IMR-90 (cell line): ENCODE measurements at regions of chrX and their contacts with region 1.

Region 1: DNA sequence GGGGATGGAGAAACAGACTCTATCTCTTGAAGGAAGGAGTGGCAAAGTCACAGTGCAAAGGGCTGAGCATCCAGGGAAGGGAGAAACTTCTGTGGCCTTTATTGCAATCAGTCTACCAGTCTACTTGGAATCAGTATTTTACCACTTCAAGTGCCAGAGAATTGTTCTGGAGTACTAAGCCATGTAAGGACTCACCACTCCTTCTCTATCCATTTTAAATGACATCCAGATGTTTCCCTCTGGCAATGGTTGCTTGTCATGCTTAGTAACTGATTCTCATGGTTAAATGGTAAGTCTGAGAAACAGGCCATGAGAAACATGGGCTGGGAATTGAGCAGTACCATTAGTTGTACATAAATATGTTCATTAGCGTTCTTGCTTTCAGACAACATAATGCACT is 21.1 kb upstream of the SMIM10 start:
- DNase-seq: no peak
- ATAC-seq: no peak
- H3K4me3 ChIP-seq: no peak overlapping the region
- H3K27ac ChIP-seq: no peak overlapping the region
- H3K4me1 ChIP-seq: peaks cover 3% of the 10 kb centered on the region; the same call in 1 of the 2 replicates
- H3K27me3 ChIP-seq: peaks cover 2% of the 10 kb centered on the region
- CTCF ChIP-seq: no peak
- POLR2A ChIP-seq: no peak
- RAD21 ChIP-seq: no peak

Region 2: DNA sequence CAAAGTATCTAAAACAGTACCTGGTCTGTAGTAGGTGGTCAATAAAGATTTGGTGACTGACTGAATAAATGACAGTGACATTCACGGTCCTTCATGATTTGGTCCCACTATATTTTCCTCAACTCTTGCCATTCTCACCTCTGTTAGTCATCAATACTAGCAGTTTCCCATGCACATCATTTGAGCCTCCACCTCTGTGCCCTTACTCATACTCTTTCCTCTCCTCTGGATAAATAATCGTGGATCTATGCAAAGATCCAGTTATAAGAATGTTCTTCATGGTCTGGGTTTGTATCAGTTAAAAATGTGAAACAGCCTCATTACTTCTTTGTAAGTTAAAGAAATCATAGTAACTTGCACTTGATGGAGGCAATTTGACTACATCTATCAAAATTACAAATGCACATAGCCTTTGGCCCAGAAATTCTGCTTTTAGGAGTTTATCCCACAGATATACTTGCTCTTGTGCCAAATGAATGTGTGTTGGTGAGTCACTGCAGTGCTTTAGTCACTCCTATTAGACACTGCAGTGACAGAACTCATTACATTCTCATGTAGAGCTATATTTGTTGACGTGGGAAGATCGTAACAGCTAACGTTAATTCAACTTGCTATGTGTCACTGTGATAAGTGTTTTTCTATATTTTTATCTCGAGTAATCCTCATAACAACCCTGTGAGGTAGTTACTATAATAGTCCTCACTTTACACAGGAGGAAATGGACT is 100.8 kb before region 1 on chrX:
- CTCF ChIA-PET with region 1: no interaction called
- POLR2A ChIA-PET with region 1: no interaction called
- dilution Hi-C with region 1: no loop called
- in situ Hi-C with region 1: no loop called
- intact Hi-C with region 1: no loop called
- DNase-seq: peak; percentile 96
- ATAC-seq: peak; percentile 78
- H3K4me3 ChIP-seq: no peak overlapping the region
- H3K27ac ChIP-seq: no peak overlapping the region
- H3K4me1 ChIP-seq: no peaks in the 10 kb centered on the region
- H3K27me3 ChIP-seq: no peaks in the 10 kb centered on the region
- CTCF ChIP-seq: no peak
- POLR2A ChIP-seq: no peak
- RAD21 ChIP-seq: no peak

Region 3: DNA sequence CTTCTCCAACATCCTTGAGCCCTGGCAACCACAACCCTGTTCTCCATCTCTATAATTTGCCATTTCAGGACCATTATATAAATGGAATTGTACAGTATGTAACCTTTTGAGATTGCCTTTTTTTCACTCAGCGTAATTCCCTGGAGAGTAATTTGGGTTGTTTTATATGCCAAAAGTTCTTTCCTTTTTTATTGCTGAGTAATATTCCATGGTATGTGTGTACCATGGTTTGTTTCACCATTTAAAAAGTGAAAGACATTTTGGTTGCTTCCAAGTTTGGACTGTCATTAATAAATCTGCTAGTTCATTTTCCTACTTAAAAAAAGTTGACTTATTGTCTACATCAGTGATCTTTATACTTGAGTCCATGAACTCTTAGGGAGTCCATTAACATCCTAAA is 11.9 kb before region 1 on chrX:
- CTCF ChIA-PET with region 1: no interaction called
- POLR2A ChIA-PET with region 1: interaction called, 12 read pairs
- dilution Hi-C with region 1: no loop called
- in situ Hi-C with region 1: no loop called
- intact Hi-C with region 1: no loop called
- DNase-seq: no peak
- ATAC-seq: no peak
- H3K4me3 ChIP-seq: no peak overlapping the region
- H3K27ac ChIP-seq: no peak overlapping the region
- H3K4me1 ChIP-seq: peaks cover 3% of the 10 kb centered on the region
- H3K27me3 ChIP-seq: peaks cover 2% of the 10 kb centered on the region
- CTCF ChIP-seq: no peak
- POLR2A ChIP-seq: no peak
- RAD21 ChIP-seq: no peak

Region 4: GRCh38 chrX:135086197-135086854 is 116.6 kb after region 1 on chrX:
- CTCF ChIA-PET with region 1: no interaction called
- POLR2A ChIA-PET with region 1: no interaction called
- dilution Hi-C with region 1: no loop called
- in situ Hi-C with region 1: no loop called
- intact Hi-C with region 1: loop called (anchors 1 kb)
- DNase-seq: peak; percentile 61
- ATAC-seq: peak; percentile 92
- H3K4me3 ChIP-seq: no peak overlapping the region
- H3K27ac ChIP-seq: no peak overlapping the region
- H3K4me1 ChIP-seq: no peaks in the 10 kb centered on the region
- H3K27me3 ChIP-seq: peaks cover 2% of the 10 kb centered on the region
- CTCF ChIP-seq: peak; percentile 59
- POLR2A ChIP-seq: no peak
- RAD21 ChIP-seq: peak; percentile 46

Region 5: DNA sequence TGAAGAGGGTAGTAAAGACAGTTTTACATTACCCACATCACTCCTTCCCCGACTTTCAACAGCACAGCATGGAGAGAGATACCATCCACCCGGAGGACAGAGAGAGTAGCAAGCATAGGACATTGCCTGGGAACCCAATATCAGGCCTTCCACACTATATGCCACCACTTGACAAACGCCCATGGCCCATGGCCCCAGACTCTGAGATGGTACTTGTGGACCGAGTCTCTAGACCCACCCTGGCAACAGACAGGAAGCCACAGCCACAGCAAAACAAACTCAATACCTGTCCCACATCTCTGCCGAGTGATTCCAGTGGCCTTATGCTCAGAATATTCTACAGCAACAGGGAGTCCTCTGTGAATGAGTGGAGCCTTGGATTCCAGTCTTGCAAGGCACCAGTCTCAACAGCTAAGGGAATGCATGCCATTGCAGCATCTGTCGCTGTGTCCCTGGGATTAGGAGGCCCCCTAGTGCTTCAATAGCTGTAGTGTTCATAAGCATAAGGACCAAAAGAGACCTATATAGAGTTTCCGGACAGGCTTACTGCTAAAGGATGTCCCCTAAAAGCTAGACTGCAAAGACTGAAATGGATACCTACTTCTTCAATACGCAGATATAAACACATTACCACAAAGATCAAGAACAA is 216.2 kb after region 1 on chrX:
- CTCF ChIA-PET with region 1: no interaction called
- POLR2A ChIA-PET with region 1: no interaction called
- dilution Hi-C with region 1: no loop called
- in situ Hi-C with region 1: no loop called
- intact Hi-C with region 1: loop called (anchors 5 kb)
- DNase-seq: peak; percentile 46
- ATAC-seq: peak; percentile 89
- H3K4me3 ChIP-seq: no peak overlapping the region
- H3K27ac ChIP-seq: no peak overlapping the region
- H3K4me1 ChIP-seq: no peaks in the 10 kb centered on the region
- H3K27me3 ChIP-seq: no peaks in the 10 kb centered on the region
- CTCF ChIP-seq: peak; percentile 51
- POLR2A ChIP-seq: no peak
- RAD21 ChIP-seq: peak; percentile 65